ENCODE measurements at regions of chr7 and their contacts with region 1.

Region 1: DNA sequence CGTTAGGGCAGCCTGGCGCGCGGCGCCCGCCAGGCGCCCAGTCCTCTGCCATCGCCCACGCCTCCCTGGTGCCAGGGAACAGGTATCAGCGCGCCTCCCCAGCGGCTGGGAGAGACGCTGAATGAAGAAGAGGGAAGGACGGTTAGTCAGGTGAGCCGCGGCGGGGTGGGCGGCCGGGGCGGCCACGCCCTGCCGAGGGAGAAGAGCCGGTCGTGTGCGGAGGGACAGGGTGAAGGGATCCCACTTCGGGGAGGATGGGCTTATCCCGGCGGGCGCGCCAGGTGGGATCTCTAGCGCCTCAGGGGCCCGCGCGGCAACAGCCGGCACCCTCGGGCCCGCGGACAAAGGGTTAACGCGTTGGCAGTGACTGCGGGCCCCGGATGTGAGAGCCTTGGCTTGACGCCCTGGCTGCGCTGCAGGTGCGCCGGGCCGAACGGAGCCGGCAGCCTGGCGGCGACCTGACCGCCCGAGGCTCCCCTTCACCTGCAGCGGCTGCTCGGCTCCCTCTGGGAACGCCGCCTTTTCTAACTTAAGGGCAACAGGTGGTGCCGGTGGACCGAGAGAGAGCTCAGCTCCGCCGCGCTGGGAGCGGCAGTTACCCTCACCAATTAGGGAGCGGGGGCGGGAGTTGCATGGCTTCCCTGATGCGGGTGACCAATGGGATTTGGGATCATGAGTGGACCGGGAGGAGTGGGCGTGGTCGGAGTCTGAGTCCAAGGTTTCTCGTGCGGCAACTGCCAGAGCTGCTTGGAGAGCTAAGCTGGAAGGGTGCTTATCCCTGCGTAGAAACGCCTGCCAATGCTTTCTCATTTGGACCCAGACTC is at the start of gene ARL4A:
- H3K4me3 ChIP-seq: peak within 1 kb of the TSS; percentile 84
- H3K27ac ChIP-seq: peak within 1 kb of the TSS; percentile 92
- H3K4me1 ChIP-seq: no peaks in the 10 kb centered on the region
- CTCF ChIP-seq: peak; percentile 82

Region 2: GRCh38 chr7:12475362-12476063 is 211.6 kb before region 1 on chr7:
- CTCF ChIA-PET with region 1: no interaction called
- POLR2A ChIA-PET with region 1: no interaction called
- H3K4me3 ChIP-seq: no peak overlapping the region
- H3K27ac ChIP-seq: no peak overlapping the region
- H3K4me1 ChIP-seq: no peaks in the 10 kb centered on the region
- CTCF ChIP-seq: no peak

Region 3: DNA sequence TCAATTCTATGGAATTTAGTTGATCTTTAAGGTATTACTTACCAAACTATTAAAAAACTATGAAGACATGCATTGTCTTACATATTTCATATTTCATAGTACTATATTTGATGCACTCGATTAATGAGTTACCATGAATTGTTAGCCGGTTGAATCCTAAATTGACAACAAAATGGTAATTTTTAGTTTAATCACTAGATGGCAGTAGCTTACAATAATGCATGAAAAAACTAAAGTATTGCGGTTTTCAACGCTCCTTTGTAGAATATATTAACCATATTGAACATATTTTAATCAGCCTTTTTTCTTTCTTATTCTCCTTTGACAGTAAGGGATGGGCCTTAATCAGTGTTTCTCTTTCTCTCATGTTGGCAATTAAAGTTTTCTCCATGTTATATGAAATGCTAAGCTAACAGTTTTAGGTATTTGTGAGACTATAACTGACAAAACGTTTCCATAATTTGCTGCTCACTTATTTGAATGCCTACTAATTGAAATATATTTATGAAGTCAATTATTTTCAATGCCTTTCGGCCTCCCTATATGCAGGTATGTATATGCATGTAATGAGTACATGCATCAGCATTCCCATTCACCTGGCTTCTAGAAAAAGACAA is 48.1 kb before region 1 on chr7:
- CTCF ChIA-PET with region 1: interaction called, 11 read pairs
- POLR2A ChIA-PET with region 1: no interaction called
- H3K4me3 ChIP-seq: no peak overlapping the region
- H3K27ac ChIP-seq: no peak overlapping the region
- H3K4me1 ChIP-seq: no peaks in the 10 kb centered on the region
- CTCF ChIP-seq: no peak

Region 4: GRCh38 chr7:12674849-12675248 is 12.3 kb before region 1 on chr7:
- CTCF ChIA-PET with region 1: interaction called, 11 read pairs
- POLR2A ChIA-PET with region 1: no interaction called
- H3K4me3 ChIP-seq: no peak overlapping the region
- H3K27ac ChIP-seq: no peak overlapping the region
- H3K4me1 ChIP-seq: no peaks in the 10 kb centered on the region
- CTCF ChIP-seq: no peak

Region 5: GRCh38 chr7:13262929-13263530 is 575.9 kb after region 1 on chr7:
- CTCF ChIA-PET with region 1: interaction called, 25 read pairs
- POLR2A ChIA-PET with region 1: interaction called, 4 read pairs
- H3K4me3 ChIP-seq: no peak overlapping the region
- H3K27ac ChIP-seq: no peak overlapping the region
- H3K4me1 ChIP-seq: no peaks in the 10 kb centered on the region
- CTCF ChIP-seq: no peak